ENCODE measurements at regions of chr1 and their contacts with region 1.

Region 1: GRCh38 chr1:28877132-28877781 is 37.1 kb upstream of the EPB41 start:
- DNase-seq: peak; percentile 56 to 96 (median 82)

Region 2: DNA sequence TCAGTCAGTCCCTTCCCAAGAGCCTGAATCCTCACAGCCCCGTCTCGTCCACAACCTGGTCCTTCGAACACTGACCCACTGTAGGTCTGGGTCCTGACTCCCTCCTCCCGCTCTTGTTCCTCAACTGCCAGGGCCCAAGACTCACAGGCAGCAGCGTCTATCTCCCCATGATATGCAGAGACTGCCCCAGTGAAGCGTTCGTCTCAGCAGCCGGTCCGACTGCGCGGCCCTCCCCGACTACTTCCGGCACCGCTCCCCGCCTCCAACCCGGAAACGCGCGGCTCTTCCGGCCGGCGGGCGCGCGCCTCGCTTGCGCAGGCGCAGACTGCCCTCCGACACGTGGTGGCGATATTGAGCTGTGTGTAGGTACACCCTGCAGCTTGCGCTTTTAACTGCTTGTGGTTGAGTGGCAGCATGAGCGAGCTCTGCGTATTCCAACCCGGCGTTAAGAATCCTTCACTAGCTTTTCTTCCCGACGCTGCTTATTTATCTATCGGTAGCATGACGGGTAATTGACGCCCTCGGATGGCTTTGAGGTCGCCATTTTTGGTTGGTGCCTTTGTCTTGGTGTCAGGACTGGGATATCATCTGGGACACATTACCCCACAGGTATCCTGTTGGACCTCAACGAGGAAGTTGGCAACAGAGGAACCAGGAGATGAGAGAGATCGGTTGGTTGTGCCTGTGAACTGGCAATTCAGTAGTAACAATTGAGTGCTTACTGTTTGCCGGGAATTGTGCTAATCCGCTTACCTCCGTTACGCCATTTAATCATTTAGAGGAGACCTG is 234.2 kb before region 1 on chr1 and contains the start of gene TAF12:
- intact Hi-C with region 1: loop called (anchors 10 kb)
- DNase-seq: peak; percentile 81 to 97 (median 86)

Region 3: GRCh38 chr1:29033829-29034466 is 156.7 kb after region 1 on chr1:
- intact Hi-C with region 1: loop called (anchors 1 kb)
- DNase-seq: no peak

Region 4: DNA sequence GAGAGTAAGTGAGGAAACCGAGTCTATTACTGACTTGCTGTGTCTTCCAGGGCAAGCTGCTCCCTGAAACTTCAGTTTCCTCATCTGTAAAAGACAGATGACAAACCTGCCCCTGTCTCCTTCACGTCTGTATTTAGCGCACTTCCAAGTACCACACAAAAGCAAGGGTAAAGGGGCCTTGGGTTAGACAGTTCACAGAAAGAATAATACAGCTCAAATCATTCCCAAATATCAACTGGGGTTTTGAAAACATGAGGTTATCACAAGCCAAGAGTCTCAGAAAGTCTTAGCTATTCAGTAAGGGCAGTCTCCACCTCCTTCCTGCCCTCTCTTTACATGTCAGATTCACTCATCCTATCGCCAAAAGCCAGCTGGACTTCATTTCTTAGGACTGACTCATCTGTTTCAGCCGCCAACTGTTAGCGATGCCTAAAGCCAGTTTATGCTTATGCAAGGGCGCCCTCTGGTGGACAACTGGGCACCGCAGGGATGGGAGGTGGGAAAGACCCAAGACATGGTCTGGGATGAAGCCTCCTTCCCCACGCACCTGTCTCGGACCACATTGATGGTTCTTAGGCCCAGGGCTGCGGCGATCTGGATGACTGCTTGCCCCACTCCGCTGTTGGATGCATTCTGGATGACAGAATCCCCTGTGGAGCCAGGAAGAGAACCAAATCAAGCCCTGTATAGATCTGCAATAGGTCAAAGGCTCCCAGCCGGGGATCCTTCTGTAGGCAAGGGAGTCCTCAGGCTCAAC is 325.5 kb after region 1 on chr1:
- intact Hi-C with region 1: loop called (anchors 1 kb)
- DNase-seq: peak; percentile 78 to 99 (median 96)

Region 5: GRCh38 chr1:29341936-29342335 is 464.7 kb after region 1 on chr1:
- intact Hi-C with region 1: no loop called
- DNase-seq: peak in 2 of 10 donors; percentile 31 to 67

Measured in posterior cingulate gyrus (tissue), 11 donors.